GM12878 (cell line): ENCODE measurements at regions of chr12 and their contacts with region 1.

Region 1: GRCh38 chr12:120167529-120168095 is 26.9 kb downstream of the GCN1 start:
- DNase-seq: no peak
- ATAC-seq: peak; percentile 46
- H3K4me3 ChIP-seq: no peak overlapping the region
- H3K27ac ChIP-seq: peak overlapping the region; percentile 76
- H3K4me1 ChIP-seq: peaks cover 19% of the 10 kb centered on the region
- H3K27me3 ChIP-seq: no peaks in the 10 kb centered on the region
- CTCF ChIP-seq: no peak
- EP300 ChIP-seq: no peak
- POLR2A ChIP-seq: no peak
- RAD21 ChIP-seq: no peak

Region 2: GRCh38 chr12:119925269-119925668 is 242.3 kb before region 1 on chr12:
- CTCF ChIA-PET with region 1: no interaction called
- POLR2A ChIA-PET with region 1: no interaction called
- RAD21 ChIA-PET with region 1: no interaction called
- SMC1A ChIA-PET with region 1: no interaction called
- in situ Hi-C with region 1: no loop called
- intact Hi-C with region 1: no loop called
- DNase-seq: no peak
- ATAC-seq: no peak
- H3K4me3 ChIP-seq: no peak overlapping the region
- H3K27ac ChIP-seq: no peak overlapping the region
- H3K4me1 ChIP-seq: no peaks in the 10 kb centered on the region
- H3K27me3 ChIP-seq: no peaks in the 10 kb centered on the region; a peak in 1 of 4 replicates
- CTCF ChIP-seq: no peak
- EP300 ChIP-seq: no peak
- POLR2A ChIP-seq: no peak
- RAD21 ChIP-seq: no peak

Region 3: GRCh38 chr12:120110550-120111501 is 56.8 kb before region 1 on chr12:
- CTCF ChIA-PET with region 1: interaction called, 5 read pairs
- POLR2A ChIA-PET with region 1: interaction called, 43 read pairs
- RAD21 ChIA-PET with region 1: interaction called, 11 read pairs
- SMC1A ChIA-PET with region 1: interaction called, 6 read pairs
- in situ Hi-C with region 1: no loop called
- intact Hi-C with region 1: no loop called
- DNase-seq: no peak
- ATAC-seq: peak; percentile 92
- H3K4me3 ChIP-seq: peak overlapping the region; percentile 62
- H3K27ac ChIP-seq: peak overlapping the region; percentile 56
- H3K4me1 ChIP-seq: peaks cover 49% of the 10 kb centered on the region
- H3K27me3 ChIP-seq: no peaks in the 10 kb centered on the region
- CTCF ChIP-seq: 0 out of 6 replicates have a peak, but pooled peaks have one; percentile 4 to 12 (median 8)
- EP300 ChIP-seq: no peak
- POLR2A ChIP-seq: peak; percentile 3
- RAD21 ChIP-seq: 0 out of 2 replicates have a peak, but pooled peaks have one; percentile 10

Region 4: GRCh38 chr12:120132863-120133385 is 34.7 kb before region 1 on chr12:
- CTCF ChIA-PET with region 1: no interaction called
- POLR2A ChIA-PET with region 1: interaction called, 6 read pairs
- RAD21 ChIA-PET with region 1: interaction called, 4 read pairs
- SMC1A ChIA-PET with region 1: interaction called, 20 read pairs
- in situ Hi-C with region 1: no loop called
- intact Hi-C with region 1: no loop called
- DNase-seq: peak; percentile 92
- ATAC-seq: peak; percentile 95
- H3K4me3 ChIP-seq: peak overlapping the region; percentile 42; the same call in 1 of the 2 replicates
- H3K27ac ChIP-seq: peak overlapping the region; percentile 84
- H3K4me1 ChIP-seq: peaks cover 31% of the 10 kb centered on the region
- H3K27me3 ChIP-seq: no peaks in the 10 kb centered on the region
- CTCF ChIP-seq: no peak
- EP300 ChIP-seq: peak; percentile 51 to 58; a peak in 2 of 4 replicates
- POLR2A ChIP-seq: peak; percentile 78
- RAD21 ChIP-seq: no peak

Region 5: GRCh38 chr12:120216742-120217605 is 49.4 kb after region 1 on chr12:
- CTCF ChIA-PET with region 1: no interaction called
- POLR2A ChIA-PET with region 1: no interaction called
- RAD21 ChIA-PET with region 1: no interaction called
- SMC1A ChIA-PET with region 1: no interaction called
- in situ Hi-C with region 1: no loop called
- intact Hi-C with region 1: no loop called
- DNase-seq: no peak
- ATAC-seq: no peak
- H3K4me3 ChIP-seq: no peak overlapping the region
- H3K27ac ChIP-seq: no peak overlapping the region
- H3K4me1 ChIP-seq: no peaks in the 10 kb centered on the region
- H3K27me3 ChIP-seq: no peaks in the 10 kb centered on the region
- CTCF ChIP-seq: no peak
- EP300 ChIP-seq: no peak
- POLR2A ChIP-seq: 0 out of 2 replicates have a peak, but pooled peaks have one; percentile 34
- RAD21 ChIP-seq: no peak